A549 (cell line): ENCODE measurements at regions of chr1 and their contacts with region 1.

Region 1: DNA sequence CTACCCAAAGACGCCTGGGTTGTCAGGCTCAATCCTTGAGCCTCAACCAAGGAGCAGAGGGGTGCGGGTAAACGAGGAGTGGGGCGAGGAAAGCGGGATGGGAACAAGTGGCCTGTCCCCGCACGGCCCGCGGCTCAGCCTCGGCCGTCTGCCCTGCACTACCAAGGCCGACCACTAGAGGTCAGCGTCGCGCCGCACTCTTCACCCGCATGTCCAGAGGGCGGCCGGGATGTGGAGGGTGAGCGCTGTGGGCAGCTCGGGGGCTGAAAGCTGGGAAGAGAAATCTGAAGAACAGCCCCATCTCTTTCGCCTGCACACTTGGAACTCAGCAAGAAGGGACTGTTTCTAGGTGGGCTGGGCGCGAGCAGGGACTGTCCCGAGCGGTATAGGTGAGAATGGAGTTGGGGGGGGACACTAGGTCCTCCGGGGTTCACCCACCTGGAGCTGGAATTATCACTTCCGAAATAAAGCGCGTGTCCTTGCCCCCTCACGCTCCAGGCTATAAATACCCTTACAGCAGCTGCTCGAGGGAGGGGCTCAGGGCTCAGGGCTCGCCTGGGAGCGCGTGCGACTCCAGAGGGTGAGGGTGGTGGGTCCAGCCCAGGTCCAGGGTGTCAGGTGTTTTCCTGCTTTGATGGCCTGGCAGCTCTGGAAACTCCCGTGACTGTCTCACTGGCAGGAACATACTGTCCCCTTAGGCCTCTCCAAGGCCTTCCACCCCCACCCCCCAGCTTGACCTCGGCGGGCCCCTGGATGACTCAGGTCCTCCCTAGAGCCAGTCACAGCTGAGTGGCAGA is 9.8 kb downstream of the SLC30A2 start:
- DNase-seq: peak; percentile 55 to 78
- ATAC-seq: peak; percentile 75 to 93
- H3K4me3 ChIP-seq: peak overlapping the region; percentile 70
- H3K27ac ChIP-seq: peak overlapping the region; percentile 72 to 87
- H3K4me1 ChIP-seq: peaks cover 11% of the 10 kb centered on the region
- CTCF ChIP-seq: peak; percentile 81
- EP300 ChIP-seq: no peak
- POLR2A ChIP-seq: no peak
- RAD21 ChIP-seq: peak; percentile 79 to 85

Region 2: DNA sequence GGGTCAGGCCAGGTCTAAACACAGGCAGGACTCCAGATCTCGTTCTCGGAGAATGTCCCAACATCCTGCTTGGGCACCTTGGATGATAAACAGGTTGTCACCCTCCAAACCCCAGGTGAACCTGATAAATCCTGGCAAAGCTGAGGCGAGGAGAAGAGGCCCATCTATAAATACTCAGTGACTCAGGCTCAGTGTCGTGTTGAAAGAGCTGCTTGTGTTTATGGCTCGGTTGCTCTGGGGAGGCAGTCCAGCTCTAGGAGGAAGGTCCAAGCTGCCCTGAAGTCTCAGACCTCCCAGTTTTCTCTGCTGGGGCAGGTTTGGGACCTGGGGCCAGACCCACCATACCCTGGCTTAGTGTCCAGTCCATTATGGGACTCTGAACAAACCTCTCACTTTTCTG is 47.1 kb after region 1 on chr1:
- CTCF ChIA-PET with region 1: interaction called, 16 read pairs
- POLR2A ChIA-PET with region 1: no interaction called
- DNase-seq: peak in 1 of 2 experiments; percentile 19
- ATAC-seq: peak; percentile 68 to 70; a peak in 5 of 6 replicates
- H3K4me3 ChIP-seq: no peak overlapping the region
- H3K27ac ChIP-seq: no peak overlapping the region
- H3K4me1 ChIP-seq: peaks cover 20% of the 10 kb centered on the region
- CTCF ChIP-seq: no peak
- EP300 ChIP-seq: no peak
- POLR2A ChIP-seq: no peak
- RAD21 ChIP-seq: no peak

Region 3: GRCh38 chr1:26102526-26102925 is 66.4 kb after region 1 on chr1:
- CTCF ChIA-PET with region 1: interaction called, 30 read pairs
- POLR2A ChIA-PET with region 1: no interaction called
- DNase-seq: no peak
- ATAC-seq: no peak
- H3K4me3 ChIP-seq: no peak overlapping the region
- H3K27ac ChIP-seq: no peak overlapping the region
- H3K4me1 ChIP-seq: peaks cover 7% of the 10 kb centered on the region; the same call in 2 of the 3 replicates
- CTCF ChIP-seq: no peak
- EP300 ChIP-seq: no peak
- POLR2A ChIP-seq: no peak
- RAD21 ChIP-seq: no peak

Region 4: GRCh38 chr1:26161415-26162219 is 125.5 kb after region 1 on chr1:
- CTCF ChIA-PET with region 1: interaction called, 17 read pairs
- POLR2A ChIA-PET with region 1: no interaction called
- DNase-seq: peak; percentile 26 to 36
- ATAC-seq: peak; percentile 56 to 60
- H3K4me3 ChIP-seq: peak overlapping the region; percentile 46
- H3K27ac ChIP-seq: peak overlapping the region; percentile 60 to 87
- H3K4me1 ChIP-seq: peaks cover 10% of the 10 kb centered on the region; the same call in 2 of the 3 replicates
- CTCF ChIP-seq: peak; percentile 37
- EP300 ChIP-seq: no peak
- POLR2A ChIP-seq: no peak
- RAD21 ChIP-seq: no peak; a peak in 1 of 5 replicates